Activated T-helper 1 cell treated with anti-CD3 and anti-CD28 coated beads, Interleukin-12 subunit alpha, Interleukin-12 subunit beta, Interleukin-2, Interleukin-4 antibody, amounts not matched to agents 30 ng/mL and 10 ng/mL and 1 ng/mL, durations not matched to agents 14 hours and 24 hours and 36 hours (primary cell): ENCODE measurements at regions of chr6 and their contacts with region 1.

Region 1: GRCh38 chr6:150079604-150080003 is 10.7 kb upstream of the ULBP3 start:
- DNase-seq: peak; percentile 12
- H3K4me3 Mint-ChIP-seq: peak overlapping the region; percentile 54
- H3K27ac Mint-ChIP-seq: no peak overlapping the region
- H3K4me1 Mint-ChIP-seq: peaks cover 22% of the 10 kb centered on the region
- H3K27me3 Mint-ChIP-seq: peaks cover 33% of the 10 kb centered on the region

Region 2: GRCh38 chr6:150016324-150017185 is 63.0 kb before region 1 on chr6:
- intact Hi-C with region 1: no loop called
- DNase-seq: peak; percentile 44
- H3K4me3 Mint-ChIP-seq: no peak overlapping the region
- H3K27ac Mint-ChIP-seq: no peak overlapping the region
- H3K4me1 Mint-ChIP-seq: peaks cover 21% of the 10 kb centered on the region
- H3K27me3 Mint-ChIP-seq: peaks cover 70% of the 10 kb centered on the region

Region 3: DNA sequence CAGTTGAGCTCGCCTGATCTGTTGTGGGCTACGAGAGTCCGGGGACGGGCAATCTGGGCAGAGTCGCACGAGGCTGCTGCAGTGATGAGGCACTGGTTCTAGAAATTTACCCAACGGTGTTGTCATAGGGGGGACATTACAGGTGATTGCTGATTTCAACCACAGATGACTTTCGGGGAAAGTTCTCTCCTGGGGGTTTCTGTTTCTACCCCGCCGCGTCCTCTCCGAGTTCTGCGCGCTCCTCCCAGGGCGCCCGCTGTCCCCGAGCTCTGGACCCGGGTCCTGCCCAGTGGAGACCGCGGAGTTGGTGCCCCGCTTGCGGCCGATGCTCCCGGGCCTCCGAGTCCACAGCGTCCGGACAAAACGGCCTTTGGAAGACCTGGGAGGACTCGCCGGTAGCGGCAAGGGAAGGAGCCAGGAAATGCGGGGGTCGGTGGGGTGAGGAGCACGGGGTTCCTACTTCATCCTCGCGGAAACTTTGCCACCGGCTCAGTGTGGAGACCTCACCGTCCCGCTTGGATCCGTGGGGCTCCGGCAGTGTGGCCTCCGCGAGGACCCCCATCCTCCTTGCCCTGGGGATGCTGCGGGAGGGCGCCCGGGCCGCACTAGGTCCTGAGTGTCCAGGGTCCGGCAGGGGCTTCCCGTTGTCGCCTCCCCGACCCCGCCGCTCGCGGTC is 41.9 kb before region 1 on chr6:
- intact Hi-C with region 1: no loop called
- DNase-seq: no peak
- H3K4me3 Mint-ChIP-seq: no peak overlapping the region
- H3K27ac Mint-ChIP-seq: no peak overlapping the region
- H3K4me1 Mint-ChIP-seq: peaks cover 5% of the 10 kb centered on the region
- H3K27me3 Mint-ChIP-seq: peaks cover 83% of the 10 kb centered on the region

Region 4: GRCh38 chr6:150099546-150099945 is 19.9 kb after region 1 on chr6:
- intact Hi-C with region 1: no loop called
- DNase-seq: no peak
- H3K4me3 Mint-ChIP-seq: no peak overlapping the region
- H3K27ac Mint-ChIP-seq: no peak overlapping the region
- H3K4me1 Mint-ChIP-seq: no peaks in the 10 kb centered on the region
- H3K27me3 Mint-ChIP-seq: no peaks in the 10 kb centered on the region

Region 5: DNA sequence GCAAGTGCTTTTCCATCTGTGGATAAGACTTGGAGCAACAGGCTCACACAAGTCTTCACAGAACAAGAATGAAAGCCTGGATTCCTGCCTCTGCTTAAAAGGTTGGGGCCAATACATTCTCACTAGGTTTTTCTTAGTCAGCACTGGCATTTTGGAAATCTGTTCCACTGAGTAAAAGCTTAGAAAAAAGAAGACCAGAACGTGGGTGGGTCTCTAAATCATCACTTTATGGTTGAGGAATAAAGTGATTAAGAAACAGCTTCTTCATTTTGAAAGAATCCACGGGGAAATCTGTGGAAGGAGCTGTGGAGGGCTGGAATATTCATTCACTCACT is 73.9 kb after region 1 on chr6:
- intact Hi-C with region 1: no loop called
- DNase-seq: no peak
- H3K4me3 Mint-ChIP-seq: no peak overlapping the region
- H3K27ac Mint-ChIP-seq: no peak overlapping the region
- H3K4me1 Mint-ChIP-seq: peaks cover 20% of the 10 kb centered on the region
- H3K27me3 Mint-ChIP-seq: peaks cover 50% of the 10 kb centered on the region

Region 6: DNA sequence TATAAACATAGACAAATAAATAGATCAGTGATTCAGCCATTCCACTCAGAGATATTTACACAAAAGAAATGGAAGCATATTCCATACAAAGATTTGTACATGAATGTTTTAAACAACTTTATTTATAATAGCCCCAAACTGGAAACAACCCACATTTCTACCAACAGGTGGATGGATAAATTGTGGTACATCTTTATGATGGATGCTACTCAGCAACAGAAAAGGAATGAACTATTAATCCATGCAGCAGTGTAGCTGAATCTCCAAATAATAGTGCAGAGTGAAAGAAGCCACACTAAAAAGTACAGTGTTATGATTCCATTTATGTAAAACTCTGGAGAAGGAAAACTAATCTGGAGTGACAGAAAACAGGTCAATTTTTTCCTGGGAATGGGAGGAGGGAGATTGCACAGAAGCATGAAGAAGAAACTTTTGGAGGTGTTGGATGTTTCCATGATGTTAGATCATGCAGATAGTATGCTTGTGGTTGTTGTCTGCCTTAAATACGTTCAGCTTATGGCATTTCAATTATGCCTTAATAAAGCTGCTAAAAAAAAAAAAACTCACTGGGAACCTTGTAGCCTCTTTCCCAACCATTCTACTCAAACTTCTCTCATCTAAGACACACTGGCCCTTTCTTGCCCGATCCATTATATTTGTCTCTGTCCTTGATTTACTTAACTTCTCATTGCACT is 164.2 kb after region 1 on chr6:
- intact Hi-C with region 1: loop called (anchors 2 kb)
- DNase-seq: no peak
- H3K4me3 Mint-ChIP-seq: no peak overlapping the region
- H3K27ac Mint-ChIP-seq: no peak overlapping the region
- H3K4me1 Mint-ChIP-seq: peaks cover 15% of the 10 kb centered on the region
- H3K27me3 Mint-ChIP-seq: peaks cover 8% of the 10 kb centered on the region

Region 7: GRCh38 chr6:150334790-150335783 is 255.5 kb after region 1 on chr6:
- intact Hi-C with region 1: loop called (anchors 1 kb)
- DNase-seq: no peak
- H3K4me3 Mint-ChIP-seq: no peak overlapping the region
- H3K27ac Mint-ChIP-seq: no peak overlapping the region
- H3K4me1 Mint-ChIP-seq: no peaks in the 10 kb centered on the region
- H3K27me3 Mint-ChIP-seq: peaks cover 7% of the 10 kb centered on the region

Region 8: GRCh38 chr6:150395398-150396009 is 315.9 kb after region 1 on chr6:
- intact Hi-C with region 1: loop called (anchors 1 kb)
- DNase-seq: peak; percentile 12
- H3K4me3 Mint-ChIP-seq: no peak overlapping the region
- H3K27ac Mint-ChIP-seq: no peak overlapping the region
- H3K4me1 Mint-ChIP-seq: no peaks in the 10 kb centered on the region
- H3K27me3 Mint-ChIP-seq: peaks cover 4% of the 10 kb centered on the region